HEK293 (cell line): ENCODE measurements at regions of chr17 and their contacts with region 1.

Region 1: DNA sequence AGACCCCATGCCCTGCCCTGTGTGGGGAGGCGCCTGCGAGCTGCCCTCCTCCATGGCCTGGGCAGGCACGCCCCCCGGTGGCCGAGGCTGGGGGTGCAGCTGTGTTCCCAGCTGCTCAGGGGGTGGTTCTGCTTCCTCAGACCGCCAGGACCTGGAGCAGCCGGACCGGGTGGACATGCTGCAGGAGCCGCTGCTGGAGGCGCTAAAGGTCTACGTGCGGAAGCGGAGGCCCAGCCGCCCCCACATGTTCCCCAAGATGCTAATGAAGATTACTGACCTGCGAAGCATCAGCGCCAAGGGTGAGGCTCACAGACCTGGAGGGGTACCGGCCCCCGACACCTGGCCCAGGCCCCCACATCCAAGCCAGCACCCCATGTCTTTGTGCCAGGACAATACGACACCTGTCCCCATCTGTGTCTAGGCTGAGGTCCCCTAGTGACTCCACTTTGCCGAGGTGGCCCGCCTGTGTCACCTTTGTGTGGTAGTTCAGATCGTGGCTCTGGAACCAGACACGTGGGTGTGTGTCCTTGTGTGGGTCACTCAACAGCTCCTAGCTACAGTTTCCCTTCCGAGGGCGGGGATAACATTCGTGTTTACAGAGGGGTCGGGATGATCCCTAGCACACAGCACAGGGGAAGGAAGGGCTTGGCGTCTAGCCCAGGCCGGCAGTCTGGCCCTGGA is 9.3 kb downstream of the GJD3 start:
- H3K4me3 ChIP-seq: no peak overlapping the region
- H3K27ac ChIP-seq: no peak overlapping the region
- H3K4me1 ChIP-seq: no peaks in the 10 kb centered on the region
- CTCF ChIP-seq: peak; percentile 98

Region 2: GRCh38 chr17:40287494-40288369 is 67.5 kb before region 1 on chr17 and contains the start of gene CDC6:
- CTCF ChIA-PET with region 1: interaction called, 21 read pairs
- POLR2A ChIA-PET with region 1: interaction called, 7 read pairs
- H3K4me3 ChIP-seq: peak within 1 kb of the TSS; percentile 96
- H3K27ac ChIP-seq: peak within 1 kb of the TSS; percentile 95
- H3K4me1 ChIP-seq: peaks cover 3% of the 10 kb centered on the region
- CTCF ChIP-seq: 0 out of 2 replicates have a peak, but pooled peaks have one; percentile 9

Region 3: GRCh38 chr17:40303009-40303657 is 52.1 kb before region 1 on chr17:
- CTCF ChIA-PET with region 1: interaction called, 453 read pairs
- POLR2A ChIA-PET with region 1: interaction called, 16 read pairs
- H3K4me3 ChIP-seq: no peak overlapping the region
- H3K27ac ChIP-seq: no peak overlapping the region
- H3K4me1 ChIP-seq: peaks cover 25% of the 10 kb centered on the region
- CTCF ChIP-seq: peak; percentile 50

Region 4: DNA sequence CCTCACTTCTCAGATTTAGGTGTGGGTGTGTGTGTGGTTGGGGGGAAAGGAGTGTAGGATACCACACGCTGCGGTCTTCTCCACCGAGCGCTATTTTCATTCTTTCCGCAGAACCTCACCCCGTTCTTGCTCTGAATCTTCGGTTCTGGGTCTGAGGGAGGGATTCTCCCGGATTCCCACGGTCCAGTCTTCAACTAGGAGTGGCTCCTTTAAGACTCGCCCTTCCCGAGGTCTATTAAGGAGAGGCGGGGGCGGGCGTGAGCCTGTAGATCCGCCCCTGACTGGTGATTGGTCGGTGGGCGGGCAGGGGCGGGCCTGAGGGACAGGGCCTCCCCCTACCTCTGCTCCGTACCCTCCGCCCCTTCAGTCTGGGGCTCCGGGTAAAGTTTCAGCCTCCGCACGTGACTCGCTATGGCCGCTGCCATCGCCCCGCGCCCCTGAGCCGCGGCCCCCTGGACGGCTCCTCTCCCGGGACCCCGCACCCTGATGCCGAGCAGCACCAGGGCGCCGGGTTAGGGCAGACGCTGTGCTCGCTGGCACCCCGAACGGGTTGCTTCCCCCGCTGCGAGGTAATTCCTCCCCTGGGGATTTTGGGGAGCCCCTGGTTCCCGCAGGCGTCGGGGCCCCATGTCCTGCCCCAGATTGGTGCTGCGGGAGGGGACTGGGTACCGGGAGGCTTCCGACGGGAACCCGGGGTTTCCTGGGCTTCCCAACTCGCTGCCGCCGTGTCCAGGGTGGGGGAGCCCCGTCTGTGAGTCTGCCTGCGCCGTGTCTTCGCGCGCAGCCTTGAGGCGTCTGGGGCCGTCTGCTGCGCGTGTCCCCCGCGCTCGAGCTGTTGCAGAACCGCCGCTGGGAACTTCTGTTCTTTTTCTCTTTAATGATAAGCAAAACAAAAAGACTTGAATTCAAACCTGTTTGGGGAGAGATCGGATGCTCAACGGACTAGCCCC is 37.1 kb before region 1 on chr17:
- CTCF ChIA-PET with region 1: interaction called, 453 read pairs
- POLR2A ChIA-PET with region 1: interaction called, 4 read pairs
- H3K4me3 ChIP-seq: peak overlapping the region; percentile 66
- H3K27ac ChIP-seq: peak overlapping the region; percentile 86
- H3K4me1 ChIP-seq: peaks cover 44% of the 10 kb centered on the region
- CTCF ChIP-seq: no peak